ENCODE measurements at regions of chr15 and their contacts with region 1.

Region 1: DNA sequence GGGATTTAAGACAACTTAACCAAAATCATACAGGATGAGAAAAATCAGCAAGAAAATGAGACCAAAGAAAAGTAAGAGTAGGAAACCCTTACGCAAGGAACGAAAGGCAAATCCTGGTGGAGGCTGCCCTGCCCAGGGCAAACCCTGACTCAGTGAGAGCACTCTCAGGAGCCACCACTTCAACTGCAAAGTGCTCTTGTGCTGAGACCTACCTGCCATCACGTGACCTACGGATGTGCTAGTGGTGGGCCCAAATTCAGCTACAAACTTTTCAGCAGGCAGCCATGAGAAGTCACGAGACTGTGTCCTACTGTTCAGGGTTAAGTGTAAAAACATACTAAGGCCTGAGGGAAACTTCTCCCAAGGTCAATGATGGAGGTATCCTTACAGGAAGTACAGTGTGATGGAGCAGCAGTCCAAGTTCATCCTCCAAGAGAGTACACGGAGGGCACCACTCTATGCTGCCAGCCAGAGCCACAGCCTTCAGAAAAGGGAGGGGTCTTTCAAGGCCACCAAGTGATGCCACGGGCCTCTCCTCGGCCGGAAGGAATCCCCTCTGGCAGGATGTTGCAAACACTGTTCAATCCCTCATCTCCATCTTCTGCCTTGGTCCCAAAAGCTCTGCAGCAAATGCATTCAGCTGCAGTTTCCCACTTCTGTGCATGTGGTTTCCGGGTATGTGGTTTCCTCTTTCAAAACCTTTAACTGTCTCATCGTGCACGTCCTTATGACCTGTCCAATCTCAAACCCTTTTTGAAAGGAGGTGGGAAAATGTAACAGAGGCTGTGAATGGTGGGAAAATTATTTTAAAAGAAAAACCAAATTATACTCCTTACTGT is 9.5 kb downstream of the CHSY1 start:
- DNase-seq: peak; percentile 35 to 93 (median 63)
- ATAC-seq: peak; percentile 88
- H3K4me3 ChIP-seq: peak overlapping the region; percentile 38 to 45
- H3K4me3 Mint-ChIP-seq: peak overlapping the region; percentile 71
- H3K27ac ChIP-seq: peak overlapping the region; percentile 13 to 76
- H3K27ac Mint-ChIP-seq: peak overlapping the region; percentile 91
- H3K4me1 ChIP-seq: peaks cover 85% of the 10 kb centered on the region
- H3K4me1 Mint-ChIP-seq: peaks cover 85% of the 10 kb centered on the region
- H3K27me3 ChIP-seq: no peaks in the 10 kb centered on the region
- H3K27me3 Mint-ChIP-seq: no peaks in the 10 kb centered on the region
- CTCF ChIP-seq: no peak

Region 2: GRCh38 chr15:100008258-100008657 is 1234.1 kb before region 1 on chr15:
- CTCF ChIA-PET with region 1: no interaction called
- POLR2A ChIA-PET with region 1: no interaction called
- intact Hi-C with region 1: no loop called
- DNase-seq: no peak
- ATAC-seq: no peak
- H3K4me3 ChIP-seq: no peak overlapping the region
- H3K4me3 Mint-ChIP-seq: no peak overlapping the region
- H3K27ac ChIP-seq: no peak overlapping the region
- H3K27ac Mint-ChIP-seq: no peak overlapping the region
- H3K4me1 ChIP-seq: no peaks in the 10 kb centered on the region
- H3K4me1 Mint-ChIP-seq: no peaks in the 10 kb centered on the region
- H3K27me3 ChIP-seq: no peaks in the 10 kb centered on the region
- H3K27me3 Mint-ChIP-seq: no peaks in the 10 kb centered on the region
- CTCF ChIP-seq: no peak

Region 3: GRCh38 chr15:100553468-100553867 is 688.9 kb before region 1 on chr15:
- CTCF ChIA-PET with region 1: no interaction called
- POLR2A ChIA-PET with region 1: no interaction called
- intact Hi-C with region 1: no loop called
- DNase-seq: no peak
- ATAC-seq: no peak
- H3K4me3 ChIP-seq: no peak overlapping the region
- H3K4me3 Mint-ChIP-seq: no peak overlapping the region
- H3K27ac ChIP-seq: no peak overlapping the region
- H3K27ac Mint-ChIP-seq: no peak overlapping the region
- H3K4me1 ChIP-seq: no peaks in the 10 kb centered on the region
- H3K4me1 Mint-ChIP-seq: no peaks in the 10 kb centered on the region
- H3K27me3 ChIP-seq: no peaks in the 10 kb centered on the region
- H3K27me3 Mint-ChIP-seq: no peaks in the 10 kb centered on the region
- CTCF ChIP-seq: no peak

Region 4: GRCh38 chr15:100602064-100602822 is 640.1 kb before region 1 on chr15 and contains the starts of genes ASB7 and LINS1:
- CTCF ChIA-PET with region 1: no interaction called
- POLR2A ChIA-PET with region 1: no interaction called
- intact Hi-C with region 1: loop called in 1 of 2 experiments (anchors 10 kb)
- DNase-seq: peak; percentile 99 to 100 (median 100)
- ATAC-seq: peak; percentile 89
- H3K4me3 ChIP-seq: peak within 1 kb of the TSS; percentile 90 to 95
- H3K4me3 Mint-ChIP-seq: no peak within 1 kb of the TSS
- H3K27ac ChIP-seq: peak within 1 kb of the TSS; percentile 71 to 94
- H3K27ac Mint-ChIP-seq: peak within 1 kb of the TSS; percentile 93
- H3K4me1 ChIP-seq: peaks cover 58% of the 10 kb centered on the region
- H3K4me1 Mint-ChIP-seq: peaks cover 64% of the 10 kb centered on the region
- H3K27me3 ChIP-seq: no peaks in the 10 kb centered on the region
- H3K27me3 Mint-ChIP-seq: no peaks in the 10 kb centered on the region
- CTCF ChIP-seq: no peak
- total RNA-seq, gene ASB7: 17.2 to 19.9 TPM
- total RNA-seq, gene LINS1: 42.8 to 45.9 TPM

Region 5: DNA sequence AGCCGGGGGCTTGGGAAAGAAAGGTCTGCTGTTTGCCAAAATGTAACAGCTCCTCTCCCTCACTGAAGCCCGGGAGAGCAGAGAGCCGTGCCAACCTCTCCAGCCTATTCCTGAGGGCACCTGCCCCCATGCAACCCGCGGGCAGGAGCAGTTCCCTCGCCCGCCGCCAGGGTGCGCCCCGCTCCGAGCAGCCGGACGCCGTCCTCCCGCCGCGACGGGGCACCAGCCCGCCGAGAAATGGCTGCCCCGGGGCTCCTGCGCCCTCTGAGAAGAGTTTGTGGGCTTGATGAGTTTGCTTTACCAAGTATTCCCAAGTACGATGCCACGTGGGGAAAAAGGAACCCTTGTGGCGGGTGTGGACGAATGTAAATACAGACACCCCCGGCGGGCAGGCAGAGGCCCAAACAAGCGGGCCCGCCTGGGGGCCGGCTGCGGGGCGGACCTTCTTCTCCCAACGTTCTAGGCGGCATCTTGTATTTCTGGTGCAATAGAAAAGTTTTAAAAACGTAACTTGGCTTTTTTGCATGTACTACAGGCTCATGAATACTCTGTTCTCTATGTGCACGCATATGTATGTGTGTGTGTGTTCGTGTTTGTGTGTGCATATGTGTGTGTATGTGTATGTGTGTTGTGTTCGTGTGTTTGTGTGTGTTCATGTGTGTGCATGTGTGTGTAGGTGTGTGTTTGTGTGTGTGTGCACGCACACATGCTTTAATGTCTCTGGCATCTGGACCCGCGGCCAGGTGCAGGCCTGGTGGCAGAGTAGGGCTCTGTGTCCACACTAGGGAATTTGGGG is 153.4 kb before region 1 on chr15:
- CTCF ChIA-PET with region 1: interaction called, 23 read pairs
- POLR2A ChIA-PET with region 1: interaction called, 3 read pairs
- intact Hi-C with region 1: no loop called
- DNase-seq: peak; percentile 64 to 89 (median 76)
- ATAC-seq: peak; percentile 98
- H3K4me3 ChIP-seq: no peak overlapping the region
- H3K4me3 Mint-ChIP-seq: no peak overlapping the region
- H3K27ac ChIP-seq: no peak overlapping the region
- H3K27ac Mint-ChIP-seq: no peak overlapping the region
- H3K4me1 ChIP-seq: no peaks in the 10 kb centered on the region
- H3K4me1 Mint-ChIP-seq: peaks cover 1% of the 10 kb centered on the region
- H3K27me3 ChIP-seq: no peaks in the 10 kb centered on the region
- H3K27me3 Mint-ChIP-seq: no peaks in the 10 kb centered on the region
- CTCF ChIP-seq: peak; percentile 98

Region 6: DNA sequence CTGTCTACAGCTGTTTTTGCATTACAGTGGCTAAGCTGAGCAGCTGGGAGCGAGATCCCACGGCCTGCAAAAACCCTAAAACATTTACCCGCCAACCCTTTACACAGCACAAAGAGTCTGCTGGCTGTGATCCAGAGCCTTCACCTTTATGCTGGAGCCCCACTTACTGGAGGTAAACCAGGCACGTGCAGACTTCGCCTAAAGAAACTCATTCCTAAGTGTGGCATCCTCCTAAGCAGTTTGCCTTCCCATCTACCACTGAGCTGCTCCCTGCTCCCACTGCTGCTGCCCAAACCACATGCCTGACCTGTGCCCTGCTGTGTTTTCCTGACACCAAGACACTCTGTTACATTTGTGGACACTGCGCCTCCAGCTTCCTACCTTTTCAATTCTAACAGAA is 43.6 kb before region 1 on chr15:
- CTCF ChIA-PET with region 1: interaction called, 3 read pairs
- POLR2A ChIA-PET with region 1: no interaction called
- intact Hi-C with region 1: loop called in 1 of 2 experiments (anchors 2 kb)
- DNase-seq: no peak
- ATAC-seq: no peak
- H3K4me3 ChIP-seq: no peak overlapping the region
- H3K4me3 Mint-ChIP-seq: no peak overlapping the region
- H3K27ac ChIP-seq: no peak overlapping the region
- H3K27ac Mint-ChIP-seq: peak overlapping the region; percentile 14
- H3K4me1 ChIP-seq: peaks cover 51% of the 10 kb centered on the region
- H3K4me1 Mint-ChIP-seq: peaks cover 83% of the 10 kb centered on the region
- H3K27me3 ChIP-seq: no peaks in the 10 kb centered on the region
- H3K27me3 Mint-ChIP-seq: no peaks in the 10 kb centered on the region
- CTCF ChIP-seq: no peak

Region 7: DNA sequence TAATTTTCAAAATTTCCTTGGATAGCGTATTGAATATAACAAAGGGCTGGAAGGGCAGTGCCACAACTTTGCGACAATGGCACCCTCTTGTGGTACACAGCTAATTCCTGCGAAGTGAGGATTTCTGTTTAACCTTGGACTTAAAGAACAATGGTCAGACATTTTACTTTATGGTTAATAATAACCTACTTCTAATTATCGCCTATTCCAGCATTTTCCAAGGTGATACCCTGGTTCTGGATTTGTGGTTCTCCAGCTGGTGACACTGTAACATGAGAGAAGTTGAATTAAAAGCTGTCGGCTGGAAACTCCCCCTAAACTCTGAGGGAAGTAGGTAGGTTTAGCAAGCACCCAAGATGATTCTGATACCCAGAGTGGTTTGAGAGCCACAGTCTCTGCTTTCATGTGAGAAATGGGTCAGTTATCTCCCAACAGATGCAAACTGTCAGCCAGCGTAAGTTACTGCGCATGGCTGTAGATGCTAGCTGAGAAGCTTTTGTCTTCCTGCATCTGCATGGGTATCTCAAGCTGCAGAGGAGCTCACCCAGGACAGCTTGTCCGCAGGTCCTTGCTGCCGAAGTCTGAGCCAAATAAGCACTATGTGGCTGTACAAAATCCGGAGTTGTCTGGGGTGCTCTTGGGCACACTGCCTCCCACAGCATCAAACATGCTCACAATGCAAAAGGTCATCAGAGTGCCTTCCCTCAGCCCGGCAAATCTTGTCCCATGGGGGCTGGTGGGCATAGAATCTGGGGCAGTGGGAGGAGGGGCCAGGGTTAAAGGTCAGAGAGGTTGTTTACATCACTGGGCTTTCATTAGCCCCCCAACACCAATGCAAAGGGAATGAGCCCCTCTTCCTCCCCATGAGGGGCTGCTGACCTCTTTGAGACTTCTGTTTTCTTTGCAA is 16.1 kb after region 1 on chr15:
- CTCF ChIA-PET with region 1: interaction called, 16 read pairs
- POLR2A ChIA-PET with region 1: interaction called, 35 read pairs
- intact Hi-C with region 1: no loop called
- DNase-seq: peak in 7 of 9 experiments; percentile 43 to 80 (median 60)
- ATAC-seq: peak; percentile 71
- H3K4me3 ChIP-seq: no peak overlapping the region
- H3K4me3 Mint-ChIP-seq: no peak overlapping the region
- H3K27ac ChIP-seq: no peak overlapping the region
- H3K27ac Mint-ChIP-seq: no peak overlapping the region
- H3K4me1 ChIP-seq: no peaks in the 10 kb centered on the region
- H3K4me1 Mint-ChIP-seq: peaks cover 2% of the 10 kb centered on the region
- H3K27me3 ChIP-seq: no peaks in the 10 kb centered on the region
- H3K27me3 Mint-ChIP-seq: peaks cover 15% of the 10 kb centered on the region
- CTCF ChIP-seq: peak; percentile 90

Region 8: DNA sequence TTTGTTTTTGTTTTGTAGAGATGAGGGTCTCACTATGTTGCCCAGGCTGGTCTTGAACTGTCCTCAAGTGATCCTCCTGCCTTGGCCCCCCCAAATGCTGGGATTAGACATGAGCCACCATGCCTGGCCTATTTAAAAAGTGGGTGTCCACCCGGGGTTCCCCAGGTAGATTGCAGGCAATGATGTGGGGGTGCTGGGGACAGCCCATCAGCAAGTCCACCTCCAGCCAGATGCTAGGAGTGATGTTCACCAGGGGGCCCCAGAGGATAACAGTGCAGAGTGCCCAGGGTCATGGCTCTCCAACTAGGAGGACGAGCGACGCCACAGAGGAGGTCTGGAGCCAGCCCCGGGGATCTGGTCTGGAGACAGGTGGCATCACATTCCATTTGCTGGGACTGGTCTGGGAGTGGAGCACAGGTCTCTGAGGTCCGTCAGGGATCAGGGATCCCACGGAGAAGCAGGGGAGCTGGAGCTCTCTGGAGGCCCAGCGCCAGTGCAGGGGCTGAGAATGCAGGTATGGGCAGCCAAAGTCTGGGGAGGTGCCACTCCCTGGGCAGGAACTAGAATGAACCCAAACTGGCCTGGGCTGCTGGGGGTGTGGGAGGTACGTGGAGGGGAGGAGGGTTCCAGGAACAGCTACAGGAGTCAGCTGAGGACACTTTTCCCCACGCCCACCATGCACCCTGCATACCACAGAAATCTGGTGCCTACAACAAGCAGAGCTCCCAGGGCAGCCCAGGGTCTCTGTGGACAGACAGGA is 298.3 kb after region 1 on chr15:
- CTCF ChIA-PET with region 1: no interaction called
- POLR2A ChIA-PET with region 1: no interaction called
- intact Hi-C with region 1: no loop called
- DNase-seq: peak in 1 of 9 experiments; percentile 27
- ATAC-seq: no peak
- H3K4me3 ChIP-seq: no peak overlapping the region
- H3K4me3 Mint-ChIP-seq: no peak overlapping the region
- H3K27ac ChIP-seq: no peak overlapping the region
- H3K27ac Mint-ChIP-seq: no peak overlapping the region
- H3K4me1 ChIP-seq: no peaks in the 10 kb centered on the region
- H3K4me1 Mint-ChIP-seq: no peaks in the 10 kb centered on the region
- H3K27me3 ChIP-seq: no peaks in the 10 kb centered on the region
- H3K27me3 Mint-ChIP-seq: peaks cover 17% of the 10 kb centered on the region
- CTCF ChIP-seq: no peak